Activated CD8-positive, alpha-beta memory T cell treated with anti-CD3 and anti-CD28 coated beads, Interleukin-2, amount 10 ng/mL, durations not matched to agents 7 days and 5 days (primary cell): ENCODE measurements at regions of chr2 and their contacts with region 1.

Region 1: GRCh38 chr2:225041851-225042799 is at the start of gene DOCK10:
- DNase-seq: peak; percentile 67
- ATAC-seq: peak; percentile 54
- H3K4me3 Mint-ChIP-seq: peak within 1 kb of the TSS; percentile 99
- H3K27ac Mint-ChIP-seq: peak within 1 kb of the TSS; percentile 100
- H3K4me1 Mint-ChIP-seq: peaks cover 44% of the 10 kb centered on the region
- H3K27me3 Mint-ChIP-seq: peaks cover 15% of the 10 kb centered on the region
- total RNA-seq, gene DOCK10: 251 to 271 TPM

Region 2: DNA sequence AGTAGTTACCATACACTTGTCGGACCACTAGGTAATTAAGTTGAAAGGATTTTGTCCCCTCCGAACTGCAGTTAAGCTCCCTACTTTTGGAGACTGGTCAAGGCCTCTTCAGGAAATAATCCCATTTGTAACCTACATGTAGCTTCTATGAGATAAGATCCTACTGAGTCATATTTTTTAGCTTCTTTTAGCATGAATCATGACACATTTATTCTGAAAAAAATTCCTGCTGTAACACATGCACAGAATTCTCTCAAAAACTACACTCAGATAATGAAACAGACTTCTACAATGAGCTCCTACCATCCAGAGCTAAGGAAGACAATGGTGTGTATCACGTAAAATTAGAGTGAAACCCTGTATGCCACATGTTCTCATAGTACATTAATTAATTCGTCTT is 225.3 kb before region 1 on chr2:
- CTCF ChIA-PET with region 1: no interaction called
- DNase-seq: no peak
- ATAC-seq: no peak
- H3K4me3 Mint-ChIP-seq: no peak overlapping the region
- H3K27ac Mint-ChIP-seq: no peak overlapping the region
- H3K4me1 Mint-ChIP-seq: no peaks in the 10 kb centered on the region
- H3K27me3 Mint-ChIP-seq: no peaks in the 10 kb centered on the region

Region 3: DNA sequence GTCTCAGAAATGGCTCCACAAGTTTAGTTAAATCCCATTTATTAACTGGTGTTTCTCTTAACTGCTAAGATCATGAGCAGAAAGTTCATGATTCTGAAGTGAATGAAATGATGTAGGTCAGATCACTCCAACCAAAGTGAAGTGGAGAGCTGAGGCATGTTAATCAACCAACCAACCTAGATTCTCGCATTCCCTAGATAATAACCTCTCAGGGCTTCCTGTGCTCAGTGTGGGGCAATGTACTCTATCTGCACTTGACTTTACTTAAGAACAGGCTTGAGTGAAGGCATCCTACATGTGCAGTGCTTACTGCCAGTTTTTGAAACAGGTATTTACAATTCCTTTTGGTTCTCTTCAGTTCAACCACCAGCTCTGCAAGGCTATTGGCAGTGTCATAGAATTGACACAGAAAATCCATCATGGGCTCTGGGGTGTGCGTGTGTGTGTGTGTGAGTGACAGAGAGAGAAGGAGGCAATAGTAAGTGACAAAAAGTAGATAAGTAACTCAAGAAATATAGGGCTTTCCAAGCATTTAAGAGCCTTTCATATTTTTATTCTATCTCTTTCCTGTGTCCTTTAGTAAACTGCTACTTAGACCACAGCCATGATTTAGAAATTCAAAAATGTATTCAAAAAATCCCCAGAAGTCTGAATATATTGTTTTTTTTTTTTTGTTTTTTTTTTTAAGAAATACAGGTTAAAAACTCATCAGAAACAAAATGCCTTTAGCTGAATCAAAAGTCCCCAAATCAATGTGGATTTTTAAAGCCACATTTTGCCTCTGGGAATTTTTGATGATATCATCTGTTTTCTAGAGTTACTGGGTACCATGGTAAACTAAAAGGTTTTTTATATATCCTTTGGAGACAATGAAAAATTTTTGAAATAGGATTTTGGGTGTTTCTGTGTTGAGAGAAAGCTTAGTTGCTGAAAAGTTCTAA is 28.4 kb before region 1 on chr2:
- CTCF ChIA-PET with region 1: interaction called, 10 read pairs
- DNase-seq: no peak
- ATAC-seq: peak; percentile 34
- H3K4me3 Mint-ChIP-seq: no peak overlapping the region
- H3K27ac Mint-ChIP-seq: no peak overlapping the region
- H3K4me1 Mint-ChIP-seq: peaks cover 50% of the 10 kb centered on the region
- H3K27me3 Mint-ChIP-seq: no peaks in the 10 kb centered on the region

Region 4: GRCh38 chr2:225052703-225053102 is 10.6 kb after region 1 on chr2:
- CTCF ChIA-PET with region 1: interaction called, 38 read pairs
- DNase-seq: peak; percentile 71
- ATAC-seq: peak; percentile 88
- H3K4me3 Mint-ChIP-seq: no peak overlapping the region
- H3K27ac Mint-ChIP-seq: peak overlapping the region; percentile 91
- H3K4me1 Mint-ChIP-seq: peaks cover 53% of the 10 kb centered on the region
- H3K27me3 Mint-ChIP-seq: peaks cover under 1% of the 10 kb centered on the region

Region 5: GRCh38 chr2:225434014-225434413 is 391.9 kb after region 1 on chr2:
- CTCF ChIA-PET with region 1: no interaction called
- DNase-seq: no peak
- ATAC-seq: no peak
- H3K4me3 Mint-ChIP-seq: no peak overlapping the region
- H3K27ac Mint-ChIP-seq: no peak overlapping the region
- H3K4me1 Mint-ChIP-seq: no peaks in the 10 kb centered on the region
- H3K27me3 Mint-ChIP-seq: no peaks in the 10 kb centered on the region